Dorsolateral prefrontal cortex (tissue), 120 donors: ENCODE measurements at regions of chr11 and their contacts with region 1.

Region 1: DNA sequence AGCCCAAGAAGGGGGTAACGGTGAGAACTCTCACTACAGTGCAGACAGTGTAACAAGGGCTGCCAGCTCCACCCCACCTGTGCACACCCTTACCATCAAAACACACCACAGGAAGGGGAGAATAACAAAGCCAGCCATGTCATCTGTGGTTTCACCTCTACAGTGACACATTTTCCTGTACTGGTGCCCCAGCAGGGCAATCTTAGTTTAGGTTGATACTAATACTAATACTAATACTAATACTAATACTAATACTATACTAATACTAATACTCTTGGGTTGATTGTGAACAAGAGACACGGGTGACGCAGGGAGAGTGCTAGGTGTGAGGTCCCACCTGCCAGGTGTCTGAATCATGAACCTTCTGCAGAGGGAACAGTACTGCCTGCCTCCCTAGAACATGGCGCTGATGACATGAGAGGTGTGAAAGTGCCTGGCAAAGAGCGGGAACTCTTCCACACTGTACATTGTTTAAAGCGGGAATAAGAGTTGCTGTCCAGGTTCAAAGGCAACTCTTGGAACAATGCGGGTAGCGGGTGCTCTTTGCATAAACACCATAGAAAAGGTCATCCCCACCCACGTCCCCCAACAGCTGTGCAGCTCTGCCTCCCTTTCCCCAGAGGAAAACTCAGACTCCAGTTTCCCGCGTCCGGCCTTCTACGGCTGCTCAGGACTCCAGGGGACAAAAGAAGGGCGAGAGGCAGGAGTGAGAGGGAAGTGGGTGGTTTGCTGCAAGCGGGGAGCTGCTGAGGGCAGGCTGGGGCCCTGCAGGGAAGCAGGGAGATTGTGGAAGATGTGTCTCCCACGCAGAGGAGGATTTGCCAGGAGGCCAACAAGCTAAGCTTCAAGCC is 25.0 kb upstream of the TMPRSS4 start:
- DNase-seq: no peak
- H3K4me3 ChIP-seq: no peak overlapping the region
- H3K27ac ChIP-seq: no peak overlapping the region
- H3K27me3 ChIP-seq: no peaks in the 10 kb centered on the region
- CTCF ChIP-seq: no peak

Region 2: GRCh38 chr11:117426269-117426685 is 625.6 kb before region 1 on chr11:
- intact Hi-C with region 1: loop called (anchors 10 kb)
- DNase-seq: peak; percentile 72 to 87 (median 79)
- H3K4me3 ChIP-seq: peak overlapping the region in 29 of 59 donors; percentile 3 to 52 (median 25)
- H3K27ac ChIP-seq: peak overlapping the region in 39 of 59 donors; percentile 2 to 86 (median 52)
- H3K27me3 ChIP-seq: no peaks in the 10 kb centered on the region
- CTCF ChIP-seq: peak; percentile 80 to 99 (median 96)

Region 3: DNA sequence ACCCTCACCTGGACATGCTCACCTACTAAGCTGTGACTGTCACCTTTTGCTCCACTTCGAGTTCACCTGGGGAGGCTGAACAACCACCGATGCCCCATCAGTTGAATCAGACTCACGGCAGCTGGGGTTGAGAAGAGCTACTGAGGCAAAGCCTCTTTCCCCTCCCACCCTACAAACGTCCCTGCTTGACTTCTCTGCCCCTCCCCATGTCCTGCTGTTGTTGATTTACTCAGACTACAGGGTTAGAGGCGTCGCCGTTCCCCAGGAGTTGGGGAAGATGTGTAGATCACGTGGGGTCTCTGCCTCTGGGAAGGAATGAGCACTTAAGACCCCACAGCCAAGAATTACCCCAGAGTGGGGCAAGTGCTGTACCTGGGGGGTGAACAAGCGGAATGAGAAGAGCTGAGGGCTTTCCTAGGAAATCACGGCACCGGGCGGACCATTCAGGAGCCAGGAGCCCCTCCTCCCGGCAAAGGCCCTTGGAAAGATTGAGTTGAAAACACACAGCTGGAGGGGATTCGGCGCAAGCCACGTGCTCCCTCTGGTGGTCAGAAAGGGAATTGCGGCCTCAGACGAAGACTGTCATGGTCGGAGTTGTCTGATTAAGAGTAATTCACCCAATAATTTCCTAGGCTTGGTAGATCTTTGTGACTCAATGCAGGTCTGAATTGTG is 234.3 kb before region 1 on chr11:
- intact Hi-C with region 1: loop called (anchors 5 kb)
- DNase-seq: peak; percentile 74 to 94 (median 90)
- H3K4me3 ChIP-seq: peak overlapping the region in 23 of 59 donors; percentile 1 to 51 (median 25)
- H3K27ac ChIP-seq: peak overlapping the region in 1 of 59 donors; percentile 75
- H3K27me3 ChIP-seq: peaks cover 0 to 5% (median 0%) of the 10 kb centered on the region in 45 donors
- CTCF ChIP-seq: peak; percentile 98 to 100 (median 100)

Region 4: DNA sequence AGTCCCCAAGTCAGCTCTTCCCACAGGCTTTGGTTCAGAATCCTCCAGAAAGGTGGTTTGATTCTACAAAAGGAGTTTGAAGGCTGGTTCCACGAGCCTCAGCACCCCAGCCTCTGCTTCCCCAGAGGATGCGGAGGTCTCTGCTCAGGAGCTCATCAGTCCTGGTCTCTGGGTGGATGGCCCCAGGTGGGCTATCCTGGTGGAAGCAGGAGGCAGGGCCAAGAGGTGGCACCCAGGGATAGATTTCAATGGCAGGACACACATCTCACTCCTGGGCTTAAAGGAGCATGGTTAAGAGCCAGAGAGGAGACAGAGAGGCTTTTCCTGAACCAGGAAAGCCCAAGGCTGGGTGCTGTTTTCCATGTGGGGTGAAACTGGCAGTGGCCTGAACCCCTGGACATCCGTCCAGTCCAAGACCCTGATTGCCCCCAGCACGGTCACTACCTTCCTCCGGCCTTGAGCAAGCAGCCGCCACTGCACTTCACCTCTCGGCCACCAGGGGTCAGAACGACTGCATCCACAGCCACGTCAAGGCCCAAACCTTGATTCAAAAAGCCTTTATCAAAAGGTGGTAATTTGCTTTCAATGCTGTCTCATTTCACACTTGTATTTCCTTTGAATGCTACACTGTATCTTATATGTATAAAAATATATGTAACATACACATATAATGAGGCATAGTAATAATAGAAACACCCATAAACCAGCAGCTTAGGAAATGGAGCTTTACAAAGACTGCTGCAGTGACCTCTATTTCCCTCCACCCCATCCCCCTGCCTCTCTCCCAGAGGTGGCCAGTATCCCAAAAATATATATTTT is 208.0 kb before region 1 on chr11:
- intact Hi-C with region 1: loop called (anchors 2 to 5 kb)
- DNase-seq: peak; percentile 69 to 90 (median 86)
- H3K4me3 ChIP-seq: no peak overlapping the region
- H3K27ac ChIP-seq: peak overlapping the region in 14 of 59 donors; percentile 1 to 41 (median 20)
- H3K27me3 ChIP-seq: no peaks in the 10 kb centered on the region
- CTCF ChIP-seq: peak; percentile 96 to 100 (median 99)

Region 5: GRCh38 chr11:117946842-117947526 is 104.9 kb before region 1 on chr11:
- intact Hi-C with region 1: loop called (anchors 2 to 5 kb)
- DNase-seq: peak; percentile 82 to 93 (median 90)
- H3K4me3 ChIP-seq: no peak overlapping the region
- H3K27ac ChIP-seq: peak overlapping the region in 1 of 59 donors; percentile 44
- H3K27me3 ChIP-seq: peaks cover 0 to 2% (median 0%) of the 10 kb centered on the region in 45 donors
- CTCF ChIP-seq: peak; percentile 89 to 100 (median 98)

Region 6: DNA sequence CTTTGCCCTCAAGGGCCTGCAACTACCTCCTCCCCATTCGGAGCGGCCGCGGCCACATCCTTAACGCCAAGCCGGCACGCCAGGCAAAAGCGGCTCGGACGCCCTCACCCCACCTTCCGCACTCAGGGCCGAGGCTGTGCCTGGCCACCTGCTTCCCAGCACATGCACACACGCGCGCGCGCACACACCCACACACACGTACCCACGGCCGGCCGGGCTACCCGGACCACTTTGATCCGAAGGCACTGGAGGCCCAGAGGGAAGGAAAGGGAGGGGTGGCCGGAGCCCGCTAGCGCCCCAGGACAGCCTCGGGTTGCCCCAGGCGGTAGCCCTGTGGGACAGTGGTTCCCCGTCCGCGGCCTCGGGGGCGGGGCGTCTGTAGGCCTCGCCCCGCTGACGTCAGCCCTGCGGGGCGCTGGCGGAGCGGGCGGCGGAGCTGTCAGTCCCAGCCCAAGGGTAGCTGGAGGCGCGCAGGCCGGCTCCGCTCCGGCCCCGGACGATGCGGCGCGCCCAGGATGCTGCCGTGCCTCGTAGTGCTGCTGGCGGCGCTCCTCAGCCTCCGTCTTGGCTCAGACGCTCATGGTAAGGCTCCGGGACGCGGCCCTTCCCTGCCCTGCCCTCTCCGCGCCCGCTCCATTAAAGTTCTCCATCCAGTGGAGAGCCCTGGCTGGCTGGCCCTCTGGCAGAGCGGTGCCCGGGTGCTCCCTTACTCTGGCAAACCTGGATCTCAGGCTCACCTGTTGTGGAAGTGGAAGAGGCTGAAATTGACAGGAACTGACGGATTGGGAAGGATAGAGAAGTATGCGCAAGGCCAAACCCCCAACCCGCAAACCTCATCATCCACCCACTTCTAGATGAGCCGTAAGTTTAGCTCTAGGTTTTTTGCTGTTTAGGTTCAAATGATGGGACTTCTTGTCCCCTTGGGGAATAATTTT is 65.6 kb before region 1 on chr11 and contains the start of gene IL10RA:
- intact Hi-C with region 1: loop called in 1 of 2 experiments (anchors 5 kb)
- DNase-seq: peak; percentile 65 to 88 (median 75)
- H3K4me3 ChIP-seq: peak within 1 kb of the TSS; percentile 49 to 94 (median 71)
- H3K27ac ChIP-seq: peak within 1 kb of the TSS in 51 of 59 donors; percentile 26 to 86 (median 65)
- H3K27me3 ChIP-seq: no peaks in the 10 kb centered on the region
- CTCF ChIP-seq: peak in 12 of 56 donors; percentile 5 to 42 (median 18)
- total RNA-seq, gene IL10RA: 3.0 to 23.1 (median 8.5) TPM

Region 7: DNA sequence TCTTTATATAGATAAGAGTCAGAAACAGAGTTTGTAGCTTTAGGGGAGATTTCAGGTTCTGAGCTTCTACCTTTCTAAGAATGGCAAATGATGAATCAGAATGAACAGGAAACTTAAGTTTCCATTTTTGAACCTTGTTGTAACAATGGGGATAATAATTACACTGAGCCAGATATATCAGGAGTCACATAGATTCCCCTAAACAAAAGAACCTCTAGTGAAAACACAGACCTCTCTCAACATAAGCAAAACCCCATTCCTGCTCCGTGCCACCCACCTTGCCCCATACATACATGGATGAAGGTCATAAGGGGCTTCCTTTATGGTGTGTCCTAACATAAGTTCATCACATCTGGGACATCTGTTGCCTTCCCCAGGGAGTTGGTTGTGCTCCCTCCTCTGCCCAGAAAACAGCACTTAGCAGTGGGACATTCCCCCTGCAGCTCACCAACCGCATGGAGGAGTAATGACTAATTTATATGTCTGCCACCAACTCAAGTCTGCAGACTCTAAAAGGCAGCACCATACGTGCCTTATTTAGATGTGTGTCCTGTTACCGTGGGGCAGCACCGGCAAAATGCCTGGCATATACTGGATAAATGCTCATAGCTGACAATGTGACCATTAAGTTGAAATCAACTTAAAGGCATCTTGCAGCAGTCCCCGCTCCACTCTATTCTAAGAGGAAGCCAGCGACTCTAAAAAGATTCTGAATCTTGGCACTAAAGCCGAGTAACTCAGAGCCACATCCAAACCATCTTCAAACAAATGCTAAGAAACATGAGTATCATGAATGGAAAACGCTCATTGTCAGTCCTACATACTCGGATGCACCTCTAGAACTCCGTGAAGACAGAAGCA is 165.0 kb after region 1 on chr11:
- intact Hi-C with region 1: no loop called
- DNase-seq: no peak
- H3K4me3 ChIP-seq: no peak overlapping the region
- H3K27ac ChIP-seq: no peak overlapping the region
- H3K27me3 ChIP-seq: peaks cover 0 to 78% (median 7%) of the 10 kb centered on the region in 45 donors
- CTCF ChIP-seq: no peak